Mammary epithelial cell (primary cell): ENCODE measurements at regions of chr6 and their contacts with region 1.

Region 1: DNA sequence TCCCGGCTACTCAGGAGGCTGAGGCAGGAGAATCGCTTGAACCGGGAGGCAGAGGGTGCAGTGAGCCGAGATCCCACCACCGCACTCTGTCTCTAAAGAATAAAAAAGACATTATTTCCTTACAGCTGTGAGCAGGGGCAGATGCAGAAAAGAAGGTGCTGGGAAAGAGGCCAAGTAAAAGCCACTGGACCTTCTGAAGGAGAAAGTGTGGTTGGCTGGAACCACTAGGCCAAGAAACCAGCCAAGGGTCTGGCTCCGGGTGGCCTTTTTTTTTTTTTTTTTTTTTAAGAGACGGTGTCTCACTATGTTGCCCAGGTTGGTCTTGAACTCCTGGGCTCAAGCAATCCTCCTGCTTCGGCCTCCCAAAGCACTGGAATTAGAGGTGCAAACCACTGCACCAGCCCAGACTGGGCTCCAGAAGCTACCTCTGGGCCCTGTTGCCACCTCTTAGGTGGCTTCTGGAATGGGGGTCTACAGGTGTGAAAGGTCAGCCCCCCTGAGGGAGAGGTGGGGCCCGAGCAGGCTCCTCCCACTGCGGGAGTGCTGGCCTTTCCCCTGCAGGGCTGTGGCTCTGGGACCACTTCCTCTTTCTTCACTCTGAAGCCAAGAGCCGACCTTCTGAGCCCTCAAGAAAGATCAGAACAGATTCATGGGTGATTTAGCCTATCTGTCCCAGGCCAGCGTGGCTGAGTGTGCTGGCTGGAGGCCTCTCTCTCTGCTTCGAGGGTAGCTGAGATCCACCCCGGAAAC is at the start of gene FGD2:
- DNase-seq: no peak
- H3K4me3 ChIP-seq: no peak within 1 kb of the TSS
- H3K27ac ChIP-seq: no peak within 1 kb of the TSS
- H3K4me1 ChIP-seq: no peaks in the 10 kb centered on the region
- H3K27me3 ChIP-seq: no peaks in the 10 kb centered on the region
- CTCF ChIP-seq: no peak
- total RNA-seq, gene FGD2: not detected

Region 2: GRCh38 chr6:36765594-36766398 is 239.4 kb before region 1 on chr6:
- CTCF ChIA-PET with region 1: no interaction called
- dilution Hi-C with region 1: no loop called
- in situ Hi-C with region 1: loop called in 1 of 2 experiments (anchors 10 kb)
- intact Hi-C with region 1: no loop called
- DNase-seq: peak; percentile 63
- H3K4me3 ChIP-seq: no peak overlapping the region
- H3K27ac ChIP-seq: no peak overlapping the region
- H3K4me1 ChIP-seq: peaks cover 21% of the 10 kb centered on the region
- H3K27me3 ChIP-seq: no peaks in the 10 kb centered on the region
- CTCF ChIP-seq: peak; percentile 94 to 98

Region 3: GRCh38 chr6:36862164-36862847 is 142.9 kb before region 1 on chr6:
- CTCF ChIA-PET with region 1: no interaction called
- dilution Hi-C with region 1: loop called (anchors 5 kb)
- in situ Hi-C with region 1: no loop called
- intact Hi-C with region 1: no loop called
- DNase-seq: peak; percentile 90
- H3K4me3 ChIP-seq: no peak overlapping the region
- H3K27ac ChIP-seq: peak overlapping the region; percentile 51
- H3K4me1 ChIP-seq: peaks cover 15% of the 10 kb centered on the region
- H3K27me3 ChIP-seq: no peaks in the 10 kb centered on the region
- CTCF ChIP-seq: no peak

Region 4: DNA sequence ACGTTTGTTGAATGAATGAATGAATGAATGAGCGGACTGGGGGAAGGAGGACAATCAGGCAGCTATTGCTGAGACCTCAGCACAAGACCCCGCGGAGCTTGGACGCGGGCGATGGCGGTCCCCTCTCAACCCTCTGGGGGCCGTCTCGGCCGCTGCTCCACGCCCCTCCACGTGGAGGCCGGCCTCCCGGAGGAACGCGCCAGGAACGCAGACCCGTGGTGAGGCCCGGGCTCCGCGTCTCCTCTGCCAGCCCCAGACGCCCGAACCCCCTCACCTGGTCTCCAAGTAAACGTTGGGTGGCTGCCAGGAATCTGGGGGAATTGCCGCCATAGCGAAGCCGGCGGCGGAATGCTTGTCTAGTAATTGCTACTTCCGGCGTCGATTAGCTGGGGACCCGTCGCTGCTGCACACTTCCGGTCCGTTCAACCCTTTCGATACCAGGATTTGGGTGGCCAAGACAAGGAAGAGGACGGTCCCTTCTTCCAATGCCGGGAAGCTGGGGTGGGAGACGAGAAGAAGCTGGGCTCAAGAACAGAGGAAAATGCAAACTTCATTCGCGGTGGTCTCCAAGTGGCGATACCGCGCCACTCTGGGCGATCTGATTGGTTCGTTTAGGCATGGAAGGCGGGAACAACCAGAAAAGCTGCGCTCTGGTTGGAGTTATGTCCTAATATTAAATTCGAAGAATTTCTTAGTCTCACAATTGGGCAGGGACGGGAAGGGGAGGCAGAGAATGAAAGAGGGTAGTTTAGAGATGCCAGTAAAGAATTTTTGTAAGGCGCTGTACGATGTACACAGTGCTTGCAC is 130.6 kb before region 1 on chr6 and contains the start of gene PPIL1:
- CTCF ChIA-PET with region 1: no interaction called
- dilution Hi-C with region 1: no loop called
- in situ Hi-C with region 1: loop called in 1 of 2 experiments (anchors 10 kb)
- intact Hi-C with region 1: no loop called
- DNase-seq: peak; percentile 88
- H3K4me3 ChIP-seq: peak within 1 kb of the TSS; percentile 61 to 78 (median 76)
- H3K27ac ChIP-seq: peak within 1 kb of the TSS; percentile 95
- H3K4me1 ChIP-seq: peaks cover 15% of the 10 kb centered on the region
- H3K27me3 ChIP-seq: no peaks in the 10 kb centered on the region
- CTCF ChIP-seq: no peak
- total RNA-seq, gene PPIL1: 24.0 to 33.5 TPM

Region 5: GRCh38 chr6:37038292-37039198 is 33.3 kb after region 1 on chr6:
- CTCF ChIA-PET with region 1: no interaction called
- dilution Hi-C with region 1: no loop called
- in situ Hi-C with region 1: no loop called
- intact Hi-C with region 1: no loop called
- DNase-seq: no peak
- H3K4me3 ChIP-seq: no peak overlapping the region
- H3K27ac ChIP-seq: no peak overlapping the region
- H3K4me1 ChIP-seq: peaks cover 6% of the 10 kb centered on the region
- H3K27me3 ChIP-seq: no peaks in the 10 kb centered on the region
- CTCF ChIP-seq: no peak

Region 6: GRCh38 chr6:37190159-37190535 is 184.9 kb after region 1 on chr6:
- CTCF ChIA-PET with region 1: interaction called, 12 read pairs
- dilution Hi-C with region 1: no loop called
- in situ Hi-C with region 1: no loop called
- intact Hi-C with region 1: no loop called
- DNase-seq: no peak
- H3K4me3 ChIP-seq: no peak overlapping the region
- H3K27ac ChIP-seq: no peak overlapping the region
- H3K4me1 ChIP-seq: no peaks in the 10 kb centered on the region
- H3K27me3 ChIP-seq: no peaks in the 10 kb centered on the region
- CTCF ChIP-seq: no peak